ENCODE measurements at regions of chr15 and their contacts with region 1.

Region 1: GRCh38 chr15:54045397-54045796 is 67.2 kb downstream of the UNC13C start:
- DNase-seq: no peak
- ATAC-seq: no peak
- H3K4me3 ChIP-seq: no peak overlapping the region
- H3K27ac ChIP-seq: no peak overlapping the region
- H3K4me1 ChIP-seq: no peaks in the 10 kb centered on the region
- H3K27me3 ChIP-seq: no peaks in the 10 kb centered on the region
- CTCF ChIP-seq: no peak
- EP300 ChIP-seq: no peak
- POLR2A ChIP-seq: no peak
- RAD21 ChIP-seq: no peak

Region 2: DNA sequence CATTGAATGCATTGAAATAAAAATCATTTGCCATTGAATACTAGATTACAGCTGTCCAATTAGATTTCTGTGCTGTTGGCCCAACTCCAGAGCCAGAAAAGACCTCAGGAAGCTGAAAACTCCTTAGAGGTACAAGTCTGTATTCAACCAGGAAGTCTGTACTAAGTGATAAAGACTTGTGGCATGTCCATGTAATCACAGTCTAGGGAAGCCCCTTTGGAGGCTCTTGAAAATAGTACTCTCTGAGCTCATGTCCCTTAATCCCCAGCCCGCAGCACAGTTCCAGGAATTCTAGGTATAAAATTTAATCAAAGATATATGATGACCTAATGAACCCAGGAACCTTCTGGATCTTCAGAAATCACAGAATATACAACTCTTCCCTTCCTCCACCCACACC is 871.9 kb after region 1 on chr15:
- CTCF ChIA-PET with region 1: no interaction called
- POLR2A ChIA-PET with region 1: no interaction called
- in situ Hi-C with region 1: no loop called
- intact Hi-C with region 1: loop called (anchors 5 kb)
- DNase-seq: no peak
- ATAC-seq: no peak
- H3K4me3 ChIP-seq: no peak overlapping the region
- H3K27ac ChIP-seq: no peak overlapping the region
- H3K4me1 ChIP-seq: no peaks in the 10 kb centered on the region
- H3K27me3 ChIP-seq: no peaks in the 10 kb centered on the region
- CTCF ChIP-seq: no peak
- EP300 ChIP-seq: no peak
- POLR2A ChIP-seq: no peak
- RAD21 ChIP-seq: no peak